Panc1 (cell line): ENCODE measurements at regions of chr2 and their contacts with region 1.

Region 1: DNA sequence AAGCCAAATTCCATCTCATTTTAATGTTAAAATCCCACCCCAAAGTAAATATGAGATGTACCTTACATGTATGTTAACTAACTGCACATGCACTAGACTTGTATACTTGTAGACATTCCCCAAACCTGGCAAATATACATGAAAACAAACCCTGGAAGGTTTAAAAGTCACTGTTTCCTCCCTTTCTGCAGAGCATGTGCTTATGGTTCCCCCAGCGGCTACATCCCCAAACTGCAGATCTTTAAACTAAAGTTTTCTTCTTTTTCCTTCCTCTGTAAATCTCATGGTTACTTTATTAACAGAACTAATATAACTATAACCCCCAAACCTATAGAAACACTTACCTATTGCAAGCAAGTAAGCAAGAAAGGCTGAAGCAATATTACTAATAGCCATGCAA is 731.5 kb downstream of the LRP1B start:
- DNase-seq: no peak
- ATAC-seq: no peak
- H3K4me3 ChIP-seq: no peak overlapping the region
- H3K27ac ChIP-seq: no peak overlapping the region
- H3K4me1 ChIP-seq: no peaks in the 10 kb centered on the region
- H3K27me3 ChIP-seq: no peaks in the 10 kb centered on the region
- CTCF ChIP-seq: peak; percentile 52; the same call in 1 of the 2 replicates

Region 2: DNA sequence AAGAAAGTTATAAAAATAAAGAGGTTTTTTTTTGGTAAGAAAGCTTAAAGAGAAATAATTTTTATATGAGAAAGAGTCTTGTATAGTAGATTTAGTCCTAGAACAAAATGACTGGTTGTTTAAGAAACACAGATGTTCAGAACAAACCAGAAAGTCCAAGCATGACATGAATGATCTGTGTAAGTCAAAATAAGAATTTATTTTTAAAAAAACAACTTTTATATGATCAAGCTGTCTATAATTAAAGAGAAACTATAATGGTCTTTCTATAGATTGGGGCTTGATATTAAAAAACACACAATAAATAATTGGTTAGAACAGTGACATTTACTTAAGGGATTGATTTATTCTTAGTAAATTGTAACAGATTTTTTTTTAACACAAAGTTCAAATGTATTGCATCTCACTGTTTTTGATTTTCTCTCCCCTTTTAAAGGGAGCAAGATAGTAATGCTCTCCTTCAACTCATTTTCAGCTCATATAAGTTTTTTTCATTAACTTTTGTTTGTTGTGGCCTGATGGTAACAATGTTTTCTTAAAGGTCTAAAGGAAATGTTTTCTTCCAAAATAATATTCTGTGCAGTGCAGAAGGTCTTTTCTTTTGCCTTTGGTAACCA is 525.2 kb before region 1 on chr2:
- CTCF ChIA-PET with region 1: no interaction called
- POLR2A ChIA-PET with region 1: interaction called, 12 read pairs
- in situ Hi-C with region 1: no loop called
- intact Hi-C with region 1: no loop called
- DNase-seq: no peak
- ATAC-seq: no peak
- H3K4me3 ChIP-seq: no peak overlapping the region
- H3K27ac ChIP-seq: no peak overlapping the region
- H3K4me1 ChIP-seq: no peaks in the 10 kb centered on the region
- H3K27me3 ChIP-seq: no peaks in the 10 kb centered on the region
- CTCF ChIP-seq: no peak

Region 3: DNA sequence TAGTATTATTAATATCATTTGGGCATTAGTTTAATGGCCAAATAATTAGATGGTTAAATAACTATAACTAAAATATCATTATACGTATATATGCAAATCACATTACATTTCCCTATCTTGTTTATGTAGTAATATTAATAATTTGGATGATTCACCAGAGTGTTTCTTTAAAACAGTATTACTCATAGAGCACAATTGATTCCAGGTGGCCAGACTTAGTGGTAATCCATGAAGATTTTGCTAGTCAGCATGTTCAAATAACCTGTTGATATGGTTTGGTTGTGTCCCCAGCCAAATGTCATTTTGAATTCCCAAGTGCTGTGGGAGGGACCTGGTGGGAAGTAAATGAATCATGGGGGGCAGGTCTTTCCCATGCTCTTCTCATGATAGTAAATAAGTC is 50.8 kb before region 1 on chr2:
- CTCF ChIA-PET with region 1: no interaction called
- POLR2A ChIA-PET with region 1: no interaction called
- in situ Hi-C with region 1: no loop called
- intact Hi-C with region 1: no loop called
- DNase-seq: no peak
- ATAC-seq: no peak
- H3K4me3 ChIP-seq: no peak overlapping the region
- H3K27ac ChIP-seq: no peak overlapping the region
- H3K4me1 ChIP-seq: no peaks in the 10 kb centered on the region
- H3K27me3 ChIP-seq: no peaks in the 10 kb centered on the region
- CTCF ChIP-seq: no peak